ENCODE measurements at regions of chr14 and their contacts with region 1.

Region 1: GRCh38 chr14:89027097-89027740 is 202.8 kb downstream of the TTC8 start:
- DNase-seq: no peak
- H3K4me3 ChIP-seq: peak overlapping the region; percentile 36
- H3K27me3 ChIP-seq: no peaks in the 10 kb centered on the region; the same call in 1 of the 2 replicates
- CTCF ChIP-seq: peak; percentile 49

Region 2: GRCh38 chr14:88667555-88668273 is 359.5 kb before region 1 on chr14:
- CTCF ChIA-PET with region 1: interaction called, 12 read pairs
- POLR2A ChIA-PET with region 1: no interaction called
- DNase-seq: no peak
- H3K4me3 ChIP-seq: no peak overlapping the region
- H3K27me3 ChIP-seq: 0 out of 2 replicates have a peak, but pooled peaks cover 2% of the 10 kb centered on the region
- CTCF ChIP-seq: peak; percentile 90

Region 3: GRCh38 chr14:89040460-89041259 is 13.4 kb after region 1 on chr14:
- CTCF ChIA-PET with region 1: interaction called, 11 read pairs
- POLR2A ChIA-PET with region 1: interaction called, 3 read pairs
- DNase-seq: peak; percentile 47
- H3K4me3 ChIP-seq: peak overlapping the region; percentile 22
- H3K27me3 ChIP-seq: peaks cover 2% of the 10 kb centered on the region
- CTCF ChIP-seq: peak; percentile 99

Region 4: GRCh38 chr14:89160437-89160836 is 133.2 kb after region 1 on chr14:
- CTCF ChIA-PET with region 1: no interaction called
- POLR2A ChIA-PET with region 1: no interaction called
- DNase-seq: no peak
- H3K4me3 ChIP-seq: no peak overlapping the region
- H3K27me3 ChIP-seq: no peaks in the 10 kb centered on the region
- CTCF ChIP-seq: no peak

Region 5: GRCh38 chr14:89912667-89913211 is 885.5 kb after region 1 on chr14:
- CTCF ChIA-PET with region 1: interaction called, 14 read pairs
- POLR2A ChIA-PET with region 1: no interaction called
- DNase-seq: peak; percentile 98
- H3K4me3 ChIP-seq: no peak overlapping the region
- H3K27me3 ChIP-seq: no peaks in the 10 kb centered on the region
- CTCF ChIP-seq: no peak

Measured in BJ (cell line).